ENCODE measurements at regions of chr7 and their contacts with region 1.

Region 1: GRCh38 chr7:82443547-82444219 is at the start of gene CACNA2D1:
- DNase-seq: peak; percentile 90 to 95 (median 95)
- ATAC-seq: peak; percentile 98
- H3K4me3 ChIP-seq: peak within 1 kb of the TSS; percentile 72
- H3K27ac ChIP-seq: peak within 1 kb of the TSS; percentile 77
- H3K4me1 ChIP-seq: no peaks in the 10 kb centered on the region
- H3K27me3 ChIP-seq: no peaks in the 10 kb centered on the region
- total RNA-seq, gene CACNA2D1: 33.7 to 55.2 (median 46.3) TPM

Region 2: DNA sequence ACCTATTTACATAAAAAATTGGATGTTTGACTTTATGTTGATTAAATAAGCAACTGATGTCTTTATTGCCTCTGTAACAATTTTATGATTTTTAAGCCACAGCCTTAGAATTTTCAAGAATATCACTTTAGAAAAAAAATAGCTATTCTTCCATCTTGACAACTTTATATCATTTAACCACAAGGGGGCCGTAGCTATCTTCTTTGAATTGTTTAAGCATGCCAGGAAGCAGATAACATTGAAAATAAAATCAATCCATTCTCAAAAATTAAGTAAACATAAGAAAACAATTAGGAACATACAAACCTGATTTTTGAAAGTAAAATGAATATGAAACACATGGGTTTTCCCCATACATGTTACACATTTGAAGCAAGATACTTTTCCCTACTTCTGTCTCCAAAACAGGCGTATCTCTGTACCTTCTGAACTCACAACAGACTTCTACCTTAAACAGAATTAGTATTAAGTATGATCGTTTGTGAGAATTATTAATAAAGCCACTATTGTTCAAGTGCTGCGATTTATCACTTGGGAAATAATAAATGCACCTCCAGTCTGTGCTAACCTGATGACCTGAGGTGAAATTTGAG is 209.1 kb before region 1 on chr7:
- intact Hi-C with region 1: loop called in 2 of 4 experiments (anchors 10 kb)
- DNase-seq: no peak
- ATAC-seq: no peak
- H3K4me3 ChIP-seq: no peak overlapping the region
- H3K27ac ChIP-seq: no peak overlapping the region
- H3K4me1 ChIP-seq: no peaks in the 10 kb centered on the region
- H3K27me3 ChIP-seq: no peaks in the 10 kb centered on the region